MCF 10A (cell line): ENCODE measurements at regions of chr2 and their contacts with region 1.

Region 1: GRCh38 chr2:161586517-161587167 is 37.6 kb upstream of the SLC4A10 start:
- DNase-seq: peak; percentile 35
- H3K4me3 Mint-ChIP-seq: no peak overlapping the region
- H3K27ac Mint-ChIP-seq: no peak overlapping the region
- H3K4me1 Mint-ChIP-seq: no peaks in the 10 kb centered on the region
- H3K27me3 Mint-ChIP-seq: peaks cover 36% of the 10 kb centered on the region
- CTCF ChIP-seq: peak; percentile 74

Region 2: DNA sequence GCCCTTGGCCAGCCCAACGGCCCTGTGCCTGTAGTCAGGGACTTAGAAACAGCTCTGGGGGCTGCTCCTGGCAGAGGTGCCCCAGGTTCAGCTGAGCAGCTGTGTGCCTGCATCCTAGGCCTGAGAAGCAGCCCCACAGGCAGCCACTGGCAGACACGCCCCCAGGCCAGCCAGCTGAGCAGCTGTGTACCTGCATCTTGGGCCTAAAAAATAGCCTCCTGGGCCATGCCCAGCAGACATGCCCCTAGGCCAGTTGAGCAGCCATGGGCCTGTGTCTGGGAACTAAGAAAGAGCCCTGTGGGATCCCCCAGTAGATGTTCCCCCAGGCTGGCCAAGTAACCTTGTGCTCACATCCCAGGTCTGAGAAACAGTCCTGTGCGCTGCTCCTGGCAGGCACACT is 106.5 kb before region 1 on chr2:
- CTCF ChIA-PET with region 1: no interaction called
- POLR2A ChIA-PET with region 1: no interaction called
- intact Hi-C with region 1: no loop called
- DNase-seq: no peak
- H3K4me3 Mint-ChIP-seq: no peak overlapping the region
- H3K27ac Mint-ChIP-seq: no peak overlapping the region
- H3K4me1 Mint-ChIP-seq: no peaks in the 10 kb centered on the region
- H3K27me3 Mint-ChIP-seq: peaks cover 32% of the 10 kb centered on the region
- CTCF ChIP-seq: no peak

Region 3: GRCh38 chr2:161570424-161571050 is 16.1 kb before region 1 on chr2:
- CTCF ChIA-PET with region 1: interaction called, 25 read pairs
- POLR2A ChIA-PET with region 1: no interaction called
- intact Hi-C with region 1: no loop called
- DNase-seq: peak; percentile 21
- H3K4me3 Mint-ChIP-seq: no peak overlapping the region
- H3K27ac Mint-ChIP-seq: no peak overlapping the region
- H3K4me1 Mint-ChIP-seq: no peaks in the 10 kb centered on the region
- H3K27me3 Mint-ChIP-seq: peaks cover 29% of the 10 kb centered on the region
- CTCF ChIP-seq: peak; percentile 11

Region 4: GRCh38 chr2:161604901-161605300 is 18.3 kb after region 1 on chr2:
- CTCF ChIA-PET with region 1: interaction called, 16 read pairs
- POLR2A ChIA-PET with region 1: no interaction called
- intact Hi-C with region 1: no loop called
- DNase-seq: no peak
- H3K4me3 Mint-ChIP-seq: no peak overlapping the region
- H3K27ac Mint-ChIP-seq: no peak overlapping the region
- H3K4me1 Mint-ChIP-seq: no peaks in the 10 kb centered on the region
- H3K27me3 Mint-ChIP-seq: peaks cover 90% of the 10 kb centered on the region
- CTCF ChIP-seq: no peak

Region 5: GRCh38 chr2:161946489-161947107 is 360.0 kb after region 1 on chr2:
- CTCF ChIA-PET with region 1: interaction called, 99 read pairs
- POLR2A ChIA-PET with region 1: interaction called, 3 read pairs
- intact Hi-C with region 1: loop called (anchors 1 kb)
- DNase-seq: peak; percentile 40
- H3K4me3 Mint-ChIP-seq: no peak overlapping the region
- H3K27ac Mint-ChIP-seq: no peak overlapping the region
- H3K4me1 Mint-ChIP-seq: no peaks in the 10 kb centered on the region
- H3K27me3 Mint-ChIP-seq: peaks cover 71% of the 10 kb centered on the region
- CTCF ChIP-seq: peak; percentile 71

Region 6: GRCh38 chr2:161954103-161954502 is 367.5 kb after region 1 on chr2:
- CTCF ChIA-PET with region 1: interaction called, 99 read pairs
- POLR2A ChIA-PET with region 1: no interaction called
- intact Hi-C with region 1: no loop called
- DNase-seq: no peak
- H3K4me3 Mint-ChIP-seq: no peak overlapping the region
- H3K27ac Mint-ChIP-seq: no peak overlapping the region
- H3K4me1 Mint-ChIP-seq: no peaks in the 10 kb centered on the region
- H3K27me3 Mint-ChIP-seq: peaks cover 77% of the 10 kb centered on the region
- CTCF ChIP-seq: no peak

Region 7: GRCh38 chr2:162007447-162008040 is 420.9 kb after region 1 on chr2:
- CTCF ChIA-PET with region 1: interaction called, 3 read pairs
- POLR2A ChIA-PET with region 1: no interaction called
- intact Hi-C with region 1: loop called (anchors 1 kb)
- DNase-seq: no peak
- H3K4me3 Mint-ChIP-seq: no peak overlapping the region
- H3K27ac Mint-ChIP-seq: no peak overlapping the region
- H3K4me1 Mint-ChIP-seq: no peaks in the 10 kb centered on the region
- H3K27me3 Mint-ChIP-seq: peaks cover 22% of the 10 kb centered on the region
- CTCF ChIP-seq: peak; percentile 72